Transverse colon (tissue), 4 donors: ENCODE measurements at regions of chrX and their contacts with region 1.

Region 1: DNA sequence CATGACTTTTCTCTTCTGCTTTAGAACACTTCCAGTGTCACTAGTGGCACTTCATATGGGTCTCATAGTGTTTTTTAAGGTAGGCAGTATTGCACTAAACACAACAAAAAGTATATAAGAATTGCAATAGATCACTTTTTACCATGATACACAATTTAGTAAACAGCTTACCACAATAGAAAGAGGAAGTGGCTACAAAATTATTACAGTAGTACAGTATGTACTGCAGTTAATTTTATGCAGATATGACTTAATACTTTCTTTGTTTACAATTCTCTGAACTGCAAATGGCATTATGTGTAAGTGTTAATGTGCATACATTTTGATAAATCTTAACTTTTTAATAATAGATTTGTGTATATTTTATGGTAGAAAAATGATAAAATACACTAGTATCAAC is 157.3 kb downstream of the RRAGB start:
- DNase-seq: no peak
- H3K4me3 ChIP-seq: no peak overlapping the region
- H3K27ac ChIP-seq: no peak overlapping the region
- H3K4me1 ChIP-seq: no peaks in the 10 kb centered on the region
- H3K27me3 ChIP-seq: no peaks in the 10 kb centered on the region
- CTCF ChIP-seq: no peak
- EP300 ChIP-seq: no peak
- POLR2A ChIP-seq: no peak

Region 2: GRCh38 chrX:53895270-53895669 is 1979.5 kb before region 1 on chrX:
- in situ Hi-C with region 1: no loop called
- intact Hi-C with region 1: loop called (anchors 10 kb)
- DNase-seq: no peak
- H3K4me3 ChIP-seq: no peak overlapping the region
- H3K27ac ChIP-seq: no peak overlapping the region
- H3K4me1 ChIP-seq: no peaks in the 10 kb centered on the region
- H3K27me3 ChIP-seq: no peaks in the 10 kb centered on the region
- CTCF ChIP-seq: no peak
- EP300 ChIP-seq: no peak
- POLR2A ChIP-seq: no peak

Region 3: DNA sequence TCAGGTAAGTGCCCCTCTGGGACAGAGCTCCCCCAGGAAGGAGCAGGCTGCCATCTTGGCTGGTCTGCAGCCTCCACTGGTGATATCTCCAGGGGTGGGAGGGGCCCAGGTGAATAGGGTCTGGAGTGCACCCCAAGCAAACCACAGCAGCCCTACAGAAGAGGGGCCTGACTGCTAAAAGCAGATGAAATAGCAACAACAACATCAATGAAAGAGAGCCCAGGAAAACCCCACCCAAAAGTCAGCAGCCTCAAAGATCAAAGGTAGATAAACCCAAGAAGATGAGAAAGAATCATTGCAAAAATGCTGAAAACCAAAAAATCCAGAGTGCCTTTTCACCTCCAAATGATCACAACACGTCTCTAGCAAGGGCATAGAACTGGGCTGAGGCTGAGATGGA is 517.6 kb before region 1 on chrX:
- in situ Hi-C with region 1: no loop called
- intact Hi-C with region 1: no loop called
- DNase-seq: no peak
- H3K4me3 ChIP-seq: no peak overlapping the region
- H3K27ac ChIP-seq: no peak overlapping the region
- H3K4me1 ChIP-seq: no peaks in the 10 kb centered on the region
- H3K27me3 ChIP-seq: no peaks in the 10 kb centered on the region
- CTCF ChIP-seq: no peak
- EP300 ChIP-seq: no peak
- POLR2A ChIP-seq: no peak

Region 4: DNA sequence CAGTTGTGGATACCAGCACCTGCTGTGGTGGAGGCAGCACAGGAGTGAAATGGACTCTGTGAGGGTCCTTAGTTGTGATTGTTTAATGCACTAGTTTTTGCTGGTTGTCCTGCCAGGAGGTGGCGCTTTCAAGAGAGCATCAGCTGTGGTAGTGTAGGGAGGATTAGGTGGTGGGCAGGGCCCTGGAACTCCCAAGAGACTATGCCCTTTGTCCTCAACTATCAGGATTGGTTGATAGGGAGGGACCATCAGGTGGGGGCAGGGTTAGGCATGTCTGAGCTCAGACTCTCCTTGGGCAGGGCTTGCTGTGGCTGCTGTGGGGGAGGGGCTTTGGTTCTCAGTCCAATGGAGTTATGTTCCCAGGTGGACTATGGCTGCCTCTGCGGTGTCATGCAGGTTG is 35.3 kb before region 1 on chrX:
- in situ Hi-C with region 1: no loop called
- intact Hi-C with region 1: no loop called
- DNase-seq: peak; percentile 51
- H3K4me3 ChIP-seq: no peak overlapping the region
- H3K27ac ChIP-seq: no peak overlapping the region
- H3K4me1 ChIP-seq: no peaks in the 10 kb centered on the region
- H3K27me3 ChIP-seq: no peaks in the 10 kb centered on the region
- CTCF ChIP-seq: peak in 1 of 5 experiments; percentile 20
- EP300 ChIP-seq: no peak
- POLR2A ChIP-seq: no peak